ENCODE measurements at regions of chr15 and their contacts with region 1.

Region 1: GRCh38 chr15:66946578-66947164 is 118.7 kb upstream of the SMAD3 start:
- DNase-seq: peak; percentile 56 to 85 (median 83)
- ATAC-seq: peak; percentile 50 to 59
- H3K4me3 ChIP-seq: no peak overlapping the region
- H3K27ac ChIP-seq: no peak overlapping the region
- H3K4me1 ChIP-seq: no peaks in the 10 kb centered on the region
- H3K27me3 ChIP-seq: no peaks in the 10 kb centered on the region

Region 2: GRCh38 chr15:66595931-66596545 is 350.6 kb before region 1 on chr15:
- intact Hi-C with region 1: no loop called
- DNase-seq: no peak
- ATAC-seq: no peak
- H3K4me3 ChIP-seq: no peak overlapping the region
- H3K27ac ChIP-seq: no peak overlapping the region
- H3K4me1 ChIP-seq: no peaks in the 10 kb centered on the region
- H3K27me3 ChIP-seq: no peaks in the 10 kb centered on the region

Region 3: DNA sequence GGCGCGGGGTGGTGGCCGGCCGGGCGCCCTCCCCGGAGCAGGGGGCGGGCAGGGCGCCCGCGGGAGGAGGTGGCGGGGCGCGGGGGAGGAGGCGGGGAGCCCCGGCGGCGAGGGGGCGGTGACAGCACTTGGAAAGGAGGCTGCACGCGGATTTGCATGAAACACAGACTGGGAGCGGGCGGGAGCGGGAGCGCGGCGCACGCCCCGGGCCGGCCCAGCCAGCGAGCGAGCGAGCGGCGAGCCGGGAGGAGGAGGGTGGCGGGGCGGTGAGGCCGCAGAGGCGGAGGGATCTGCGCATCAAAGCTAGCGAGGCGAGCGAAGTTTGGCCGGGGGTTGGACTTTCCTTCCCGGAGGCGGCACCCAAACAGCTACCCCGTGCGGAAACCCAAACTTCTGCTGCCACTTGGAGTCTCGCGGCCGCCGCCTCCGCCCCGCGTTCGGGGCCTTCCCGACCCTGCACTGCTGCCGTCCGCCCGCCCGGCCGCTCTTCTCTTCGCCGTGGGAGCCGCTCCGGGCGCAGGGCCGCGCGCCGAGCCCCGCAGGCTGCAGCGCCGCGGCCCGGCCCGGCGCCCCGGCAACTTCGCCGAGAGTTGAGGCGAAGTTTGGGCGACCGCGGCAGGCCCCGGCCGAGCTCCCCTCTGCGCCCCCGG is 118.9 kb after region 1 on chr15 and contains the start of gene SMAD3:
- intact Hi-C with region 1: loop called in 1 of 4 experiments (anchors 10 kb)
- DNase-seq: peak; percentile 94 to 97 (median 97)
- ATAC-seq: peak; percentile 91 to 93
- H3K4me3 ChIP-seq: peak within 1 kb of the TSS; percentile 85
- H3K27ac ChIP-seq: peak within 1 kb of the TSS; percentile 85
- H3K4me1 ChIP-seq: peaks cover 21% of the 10 kb centered on the region
- H3K27me3 ChIP-seq: no peaks in the 10 kb centered on the region
- total RNA-seq, gene SMAD3: 29.2 to 40.5 (median 30.5) TPM

Region 4: GRCh38 chr15:67303490-67304363 is 357.1 kb after region 1 on chr15:
- intact Hi-C with region 1: loop called (anchors 2 to 5 kb)
- DNase-seq: no peak
- ATAC-seq: peak in 1 of 2 donors; percentile 44
- H3K4me3 ChIP-seq: no peak overlapping the region
- H3K27ac ChIP-seq: no peak overlapping the region
- H3K4me1 ChIP-seq: peaks cover 2% of the 10 kb centered on the region
- H3K27me3 ChIP-seq: no peaks in the 10 kb centered on the region

Region 5: GRCh38 chr15:67422296-67422695 is 475.6 kb after region 1 on chr15:
- intact Hi-C with region 1: loop called in 1 of 4 experiments (anchors 10 kb)
- DNase-seq: no peak
- ATAC-seq: no peak
- H3K4me3 ChIP-seq: no peak overlapping the region
- H3K27ac ChIP-seq: no peak overlapping the region
- H3K4me1 ChIP-seq: no peaks in the 10 kb centered on the region
- H3K27me3 ChIP-seq: no peaks in the 10 kb centered on the region

Region 6: DNA sequence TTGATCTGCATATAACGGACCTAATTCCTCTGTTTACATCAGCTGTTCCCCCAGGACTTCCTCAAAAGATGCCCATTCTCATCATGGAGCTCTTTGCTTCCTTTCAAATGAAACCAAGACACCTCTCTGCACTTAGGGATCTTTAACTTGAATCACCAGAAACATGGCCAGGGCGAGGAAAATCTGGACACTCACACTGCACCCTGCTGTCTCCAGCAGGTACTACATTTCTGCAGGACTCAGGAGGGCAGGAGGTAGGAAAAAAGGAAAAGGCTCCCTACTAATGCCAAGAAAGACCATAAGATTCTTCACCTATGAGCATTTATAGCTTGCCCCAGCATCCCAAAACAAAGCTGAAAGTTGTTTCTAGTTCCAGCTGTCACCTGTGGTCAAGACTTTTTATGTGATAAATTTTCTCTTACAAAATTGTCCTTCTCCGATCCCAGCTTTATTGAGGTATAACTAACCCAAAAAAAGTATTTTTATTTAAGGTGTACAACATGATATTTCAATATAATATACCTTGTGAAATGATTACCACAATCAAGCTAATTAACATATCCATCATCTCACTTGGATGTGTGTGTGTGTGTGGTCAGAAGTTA is 486.9 kb after region 1 on chr15:
- intact Hi-C with region 1: loop called (anchors 2 to 10 kb)
- DNase-seq: peak; percentile 26 to 70 (median 62)
- ATAC-seq: peak; percentile 70 to 80
- H3K4me3 ChIP-seq: no peak overlapping the region
- H3K27ac ChIP-seq: no peak overlapping the region
- H3K4me1 ChIP-seq: no peaks in the 10 kb centered on the region
- H3K27me3 ChIP-seq: no peaks in the 10 kb centered on the region

Region 7: GRCh38 chr15:67839929-67840748 is 893.5 kb after region 1 on chr15 and contains the start of gene RNU6-1:
- intact Hi-C with region 1: loop called in 1 of 4 experiments (anchors 10 kb)
- DNase-seq: peak; percentile 95 to 98 (median 98)
- ATAC-seq: peak; percentile 92 to 94
- H3K4me3 ChIP-seq: peak within 1 kb of the TSS; percentile 87
- H3K27ac ChIP-seq: peak within 1 kb of the TSS; percentile 92
- H3K4me1 ChIP-seq: peaks cover 5% of the 10 kb centered on the region
- H3K27me3 ChIP-seq: no peaks in the 10 kb centered on the region
- total RNA-seq, gene RNU6-1: not detected